ENCODE measurements at regions of chr1 and their contacts with region 1.

Region 1: DNA sequence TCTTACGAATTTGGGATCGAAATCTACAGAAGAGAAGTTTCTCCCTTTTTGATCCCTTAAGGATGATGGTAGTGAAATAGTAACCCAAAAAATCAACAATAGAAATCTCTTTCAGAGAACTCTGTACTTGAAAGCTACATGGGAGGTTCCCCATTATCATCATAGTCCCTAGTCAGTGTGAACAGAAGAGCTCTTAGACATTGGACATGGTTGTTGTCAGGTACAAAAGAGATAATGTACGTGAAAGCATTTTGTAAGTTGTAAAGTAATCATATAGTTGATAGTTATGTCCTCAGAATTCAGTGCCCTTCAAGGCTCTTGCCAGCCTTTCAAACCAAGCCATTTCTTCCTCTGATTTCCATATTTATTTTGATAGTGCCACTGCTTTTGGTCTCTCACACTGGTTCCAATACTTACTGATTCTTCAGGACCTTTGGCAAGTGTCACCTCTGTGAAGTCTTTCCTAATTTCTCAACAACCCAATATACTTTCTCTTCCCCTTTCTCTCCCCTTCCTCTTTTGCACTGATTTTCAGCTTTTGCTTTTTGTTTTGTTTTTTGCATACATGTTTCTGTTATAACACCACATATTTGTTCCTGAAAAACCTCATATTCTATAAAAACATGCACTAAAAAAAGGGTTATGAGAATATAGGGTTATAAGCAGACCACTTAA is 22.4 kb downstream of the VPS45 start:
- DNase-seq: no peak
- ATAC-seq: peak in 1 of 4 donors; percentile 41
- H3K4me3 ChIP-seq: no peak overlapping the region
- H3K27ac ChIP-seq: peak overlapping the region in 2 of 12 donors; percentile 15 to 64
- H3K4me1 ChIP-seq: peaks cover 0 to 31% (median 5%) of the 10 kb centered on the region in 12 donors
- H3K27me3 ChIP-seq: no peaks in the 10 kb centered on the region
- CTCF ChIP-seq: no peak
- POLR2A ChIP-seq: no peak

Region 2: GRCh38 chr1:150132372-150132771 is 42.4 kb after region 1 on chr1:
- intact Hi-C with region 1: loop called in 1 of 10 experiments (anchors 5 kb)
- DNase-seq: no peak
- ATAC-seq: no peak
- H3K4me3 ChIP-seq: no peak overlapping the region
- H3K27ac ChIP-seq: no peak overlapping the region
- H3K4me1 ChIP-seq: no peaks in the 10 kb centered on the region
- H3K27me3 ChIP-seq: no peaks in the 10 kb centered on the region
- CTCF ChIP-seq: no peak
- POLR2A ChIP-seq: no peak

Region 3: GRCh38 chr1:150493163-150493562 is 403.2 kb after region 1 on chr1:
- intact Hi-C with region 1: no loop called
- DNase-seq: no peak
- ATAC-seq: no peak
- H3K4me3 ChIP-seq: no peak overlapping the region
- H3K27ac ChIP-seq: no peak overlapping the region
- H3K4me1 ChIP-seq: peaks cover 0 to 7% (median 2%) of the 10 kb centered on the region in 12 donors
- H3K27me3 ChIP-seq: no peaks in the 10 kb centered on the region
- CTCF ChIP-seq: no peak
- POLR2A ChIP-seq: no peak

Region 4: GRCh38 chr1:150944856-150945255 is 854.9 kb after region 1 on chr1:
- intact Hi-C with region 1: no loop called
- DNase-seq: no peak
- ATAC-seq: no peak
- H3K4me3 ChIP-seq: no peak overlapping the region
- H3K27ac ChIP-seq: no peak overlapping the region
- H3K4me1 ChIP-seq: no peaks in the 10 kb centered on the region
- H3K27me3 ChIP-seq: no peaks in the 10 kb centered on the region
- CTCF ChIP-seq: no peak
- POLR2A ChIP-seq: no peak

Measured in heart left ventricle (tissue), 16 donors.